Naive thymus-derived CD4-positive, alpha-beta T cell (primary cell): ENCODE measurements at regions of chr6 and their contacts with region 1.

Region 1: GRCh38 chr6:121055572-121056163 is 278.6 kb downstream of the TBC1D32 start:
- DNase-seq: peak in 5 of 9 donors; percentile 11 to 38 (median 34)
- ATAC-seq: peak; percentile 61
- H3K4me3 ChIP-seq: no peak overlapping the region
- H3K4me3 Mint-ChIP-seq: peak overlapping the region in 1 of 10 donors; percentile 35
- H3K27ac ChIP-seq: no peak overlapping the region
- H3K27ac Mint-ChIP-seq: no peak overlapping the region
- H3K4me1 ChIP-seq: no peaks in the 10 kb centered on the region
- H3K4me1 Mint-ChIP-seq: peaks cover 0 to 5% (median 0%) of the 10 kb centered on the region in 7 donors
- H3K27me3 ChIP-seq: no peaks in the 10 kb centered on the region
- H3K27me3 Mint-ChIP-seq: peaks cover 0 to 5% (median 0%) of the 10 kb centered on the region in 5 donors

Region 2: GRCh38 chr6:119333707-119334295 is 1721.9 kb before region 1 on chr6:
- CTCF ChIA-PET with region 1: no interaction called
- POLR2A ChIA-PET with region 1: no interaction called
- intact Hi-C with region 1: loop called in 1 of 2 experiments (anchors 10 kb)
- DNase-seq: peak in 6 of 9 donors; percentile 24 to 56 (median 42)
- ATAC-seq: peak; percentile 78
- H3K4me3 ChIP-seq: no peak overlapping the region
- H3K4me3 Mint-ChIP-seq: no peak overlapping the region
- H3K27ac ChIP-seq: no peak overlapping the region
- H3K27ac Mint-ChIP-seq: no peak overlapping the region
- H3K4me1 ChIP-seq: no peaks in the 10 kb centered on the region
- H3K4me1 Mint-ChIP-seq: peaks cover 0 to 53% (median 11%) of the 10 kb centered on the region in 7 donors
- H3K27me3 ChIP-seq: no peaks in the 10 kb centered on the region
- H3K27me3 Mint-ChIP-seq: no peaks in the 10 kb centered on the region

Region 3: DNA sequence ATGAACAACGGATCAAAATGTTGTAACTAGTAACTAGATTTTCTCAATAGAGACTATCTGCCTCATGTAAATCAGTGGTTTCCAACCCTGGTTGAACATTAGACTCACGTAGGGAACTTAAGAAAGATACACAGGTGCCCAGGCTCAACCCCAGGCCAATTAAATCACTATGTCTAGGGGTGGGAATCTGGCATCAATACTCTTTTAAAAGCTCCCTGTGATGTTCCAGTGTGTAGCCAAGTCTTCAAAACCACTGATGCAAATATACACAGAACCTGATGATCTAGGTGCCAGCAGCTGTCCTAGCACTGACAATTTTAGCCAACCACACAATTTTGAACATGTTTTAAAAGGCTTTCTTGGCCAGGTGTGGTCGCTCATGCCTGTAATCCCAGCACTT is 149.9 kb after region 1 on chr6:
- CTCF ChIA-PET with region 1: no interaction called
- POLR2A ChIA-PET with region 1: no interaction called
- intact Hi-C with region 1: no loop called
- DNase-seq: no peak
- ATAC-seq: no peak
- H3K4me3 ChIP-seq: no peak overlapping the region
- H3K4me3 Mint-ChIP-seq: no peak overlapping the region
- H3K27ac ChIP-seq: no peak overlapping the region
- H3K27ac Mint-ChIP-seq: no peak overlapping the region
- H3K4me1 ChIP-seq: no peaks in the 10 kb centered on the region
- H3K4me1 Mint-ChIP-seq: peaks cover 0 to 2% (median 0%) of the 10 kb centered on the region in 7 donors
- H3K27me3 ChIP-seq: no peaks in the 10 kb centered on the region
- H3K27me3 Mint-ChIP-seq: no peaks in the 10 kb centered on the region

Region 4: DNA sequence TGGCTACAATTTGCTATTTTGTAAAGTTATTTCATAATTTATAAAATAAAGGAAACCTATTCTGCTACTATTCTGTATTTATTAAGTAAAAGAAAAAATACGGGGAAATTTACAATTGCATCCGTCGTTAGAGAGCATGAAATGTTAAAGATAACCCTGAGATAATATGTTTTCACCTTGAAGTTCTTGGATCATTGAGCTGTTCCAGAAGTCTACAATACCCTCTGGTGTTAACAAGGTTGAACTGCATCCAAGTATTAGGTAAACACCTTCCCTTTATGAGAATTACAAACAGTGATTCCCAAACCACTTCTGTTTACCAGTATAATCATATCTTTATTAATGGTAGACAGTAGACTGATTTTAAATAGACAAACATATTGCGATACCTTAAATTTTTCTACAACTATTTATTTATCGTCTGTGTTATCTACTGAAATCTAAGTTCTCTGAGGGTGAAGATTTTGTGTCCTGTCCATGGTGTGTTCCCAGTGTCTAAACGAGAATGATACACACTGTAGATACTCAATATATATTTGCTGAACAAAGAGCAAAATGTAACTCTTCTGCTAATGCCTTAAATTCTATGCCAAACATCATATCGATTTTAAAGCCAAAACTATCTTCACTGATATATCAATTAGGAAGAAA is 250.4 kb after region 1 on chr6:
- CTCF ChIA-PET with region 1: no interaction called
- POLR2A ChIA-PET with region 1: no interaction called
- intact Hi-C with region 1: loop called (anchors 1 kb)
- DNase-seq: peak in 5 of 9 donors; percentile 2 to 14 (median 6)
- ATAC-seq: peak; percentile 62
- H3K4me3 ChIP-seq: no peak overlapping the region
- H3K4me3 Mint-ChIP-seq: no peak overlapping the region
- H3K27ac ChIP-seq: no peak overlapping the region
- H3K27ac Mint-ChIP-seq: peak overlapping the region in 1 of 9 donors; percentile 54
- H3K4me1 ChIP-seq: no peaks in the 10 kb centered on the region
- H3K4me1 Mint-ChIP-seq: peaks cover 0 to 7% (median 0%) of the 10 kb centered on the region in 7 donors
- H3K27me3 ChIP-seq: no peaks in the 10 kb centered on the region
- H3K27me3 Mint-ChIP-seq: no peaks in the 10 kb centered on the region

Region 5: DNA sequence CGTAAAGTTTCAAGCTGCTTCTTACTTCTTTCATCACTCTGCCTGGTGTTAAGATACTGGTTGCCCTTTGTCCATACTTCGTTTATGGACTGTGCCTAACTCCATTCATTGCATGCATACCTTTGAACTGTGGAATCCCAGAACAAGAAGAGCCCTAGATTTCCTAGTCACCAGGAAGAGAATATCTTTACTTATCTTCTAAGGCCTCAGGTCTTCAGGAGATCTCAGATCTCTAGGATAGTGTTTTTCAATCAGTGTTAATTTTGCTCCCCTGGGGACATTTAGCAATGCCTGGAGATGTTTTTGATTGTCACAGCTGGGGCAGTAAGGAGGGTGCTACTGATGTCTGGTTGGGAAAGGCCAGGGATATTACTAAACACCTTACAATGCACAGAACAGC is 344.3 kb after region 1 on chr6:
- CTCF ChIA-PET with region 1: no interaction called
- POLR2A ChIA-PET with region 1: no interaction called
- intact Hi-C with region 1: loop called in 1 of 2 experiments (anchors 1 kb)
- DNase-seq: no peak
- ATAC-seq: no peak
- H3K4me3 ChIP-seq: no peak overlapping the region
- H3K4me3 Mint-ChIP-seq: no peak overlapping the region
- H3K27ac ChIP-seq: no peak overlapping the region
- H3K27ac Mint-ChIP-seq: no peak overlapping the region
- H3K4me1 ChIP-seq: no peaks in the 10 kb centered on the region
- H3K4me1 Mint-ChIP-seq: no peaks in the 10 kb centered on the region
- H3K27me3 ChIP-seq: no peaks in the 10 kb centered on the region
- H3K27me3 Mint-ChIP-seq: peaks cover 0 to 7% (median 5%) of the 10 kb centered on the region in 5 donors

Region 6: GRCh38 chr6:122033539-122034181 is 978.0 kb after region 1 on chr6:
- CTCF ChIA-PET with region 1: interaction called, 3 read pairs
- POLR2A ChIA-PET with region 1: no interaction called
- intact Hi-C with region 1: loop called (anchors 1 kb)
- DNase-seq: peak in 6 of 9 donors; percentile 12 to 60 (median 53)
- ATAC-seq: peak; percentile 84
- H3K4me3 ChIP-seq: no peak overlapping the region
- H3K4me3 Mint-ChIP-seq: no peak overlapping the region
- H3K27ac ChIP-seq: no peak overlapping the region
- H3K27ac Mint-ChIP-seq: no peak overlapping the region
- H3K4me1 ChIP-seq: no peaks in the 10 kb centered on the region
- H3K4me1 Mint-ChIP-seq: peaks cover 0 to 12% (median 0%) of the 10 kb centered on the region in 7 donors
- H3K27me3 ChIP-seq: no peaks in the 10 kb centered on the region
- H3K27me3 Mint-ChIP-seq: peaks cover 0 to 5% (median 0%) of the 10 kb centered on the region in 5 donors

Region 7: GRCh38 chr6:122530440-122531046 is 1474.9 kb after region 1 on chr6:
- CTCF ChIA-PET with region 1: no interaction called
- POLR2A ChIA-PET with region 1: no interaction called
- intact Hi-C with region 1: loop called in 1 of 2 experiments (anchors 1 kb)
- DNase-seq: peak in 8 of 9 donors; percentile 36 to 73 (median 64)
- ATAC-seq: peak; percentile 86
- H3K4me3 ChIP-seq: no peak overlapping the region
- H3K4me3 Mint-ChIP-seq: no peak overlapping the region
- H3K27ac ChIP-seq: no peak overlapping the region
- H3K27ac Mint-ChIP-seq: no peak overlapping the region
- H3K4me1 ChIP-seq: no peaks in the 10 kb centered on the region
- H3K4me1 Mint-ChIP-seq: peaks cover 0 to 8% (median 0%) of the 10 kb centered on the region in 7 donors
- H3K27me3 ChIP-seq: no peaks in the 10 kb centered on the region
- H3K27me3 Mint-ChIP-seq: peaks cover 34 to 48% (median 37%) of the 10 kb centered on the region in 5 donors